ENCODE measurements at regions of chr13 and their contacts with region 1.

Region 1: GRCh38 chr13:107211073-107211472 is 643.1 kb upstream of the ARGLU1 start:
- DNase-seq: peak; percentile 70 to 73
- H3K4me3 ChIP-seq: no peak overlapping the region
- H3K27ac ChIP-seq: no peak overlapping the region
- H3K4me1 ChIP-seq: no peaks in the 10 kb centered on the region
- H3K27me3 ChIP-seq: no peaks in the 10 kb centered on the region
- CTCF ChIP-seq: peak; percentile 95

Region 2: GRCh38 chr13:107650081-107650701 is 439.1 kb after region 1 on chr13:
- CTCF ChIA-PET with region 1: no interaction called
- POLR2A ChIA-PET with region 1: no interaction called
- intact Hi-C with region 1: loop called (anchors 1 kb)
- DNase-seq: peak in 1 of 2 experiments; percentile 45
- H3K4me3 ChIP-seq: no peak overlapping the region
- H3K27ac ChIP-seq: no peak overlapping the region
- H3K4me1 ChIP-seq: no peaks in the 10 kb centered on the region
- H3K27me3 ChIP-seq: no peaks in the 10 kb centered on the region
- CTCF ChIP-seq: peak; percentile 84

Region 3: DNA sequence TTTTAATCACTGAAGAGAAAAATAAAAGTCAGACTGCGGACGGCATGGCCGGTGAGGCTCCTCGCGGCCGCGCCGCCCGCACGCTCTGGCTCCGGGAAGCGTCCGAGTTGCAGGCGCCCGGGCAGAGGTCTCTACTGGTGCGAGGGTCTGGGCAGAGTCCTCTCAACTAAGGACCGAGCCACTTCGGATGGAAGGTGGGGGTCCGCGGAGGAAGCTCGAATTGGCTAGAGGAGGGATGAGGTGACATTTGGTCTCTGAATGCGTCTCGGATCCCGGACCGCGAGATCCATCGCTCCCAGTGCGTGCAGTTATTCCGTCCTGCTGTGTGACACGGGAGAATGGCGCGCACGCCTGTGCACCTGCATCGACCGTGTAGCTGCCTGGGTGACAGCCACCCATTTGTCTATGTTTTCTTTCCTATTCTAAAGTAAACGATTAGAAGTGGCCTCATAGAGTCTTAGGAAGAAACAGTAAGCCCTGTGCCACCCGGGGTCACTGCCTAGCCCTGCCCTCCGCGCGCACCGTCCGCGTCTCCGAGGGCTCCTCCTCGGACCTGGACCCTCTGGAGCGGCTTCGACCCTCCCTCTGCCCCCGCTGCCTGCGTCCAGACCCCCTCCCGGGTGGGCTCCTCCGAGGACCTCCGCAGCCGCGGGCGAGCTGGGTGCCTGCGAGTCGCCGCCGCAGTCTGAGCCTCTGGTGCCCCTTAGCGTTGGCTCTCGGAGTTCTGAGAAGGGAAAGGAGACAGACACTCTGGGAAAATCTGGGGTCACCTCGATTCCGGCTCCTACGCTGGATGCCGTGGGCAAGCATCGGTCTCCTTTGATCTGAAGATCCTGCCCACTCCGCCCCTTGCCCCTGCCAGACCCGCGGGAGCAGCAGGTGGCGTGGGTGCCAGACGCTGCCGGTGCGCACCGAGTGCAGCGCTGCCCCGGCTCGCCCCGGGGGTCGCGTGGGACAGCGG is 656.9 kb after region 1 on chr13:
- CTCF ChIA-PET with region 1: no interaction called
- POLR2A ChIA-PET with region 1: no interaction called
- intact Hi-C with region 1: loop called (anchors 2 kb)
- DNase-seq: peak in 1 of 2 experiments; percentile 29
- H3K4me3 ChIP-seq: peak overlapping the region; percentile 61
- H3K27ac ChIP-seq: no peak overlapping the region
- H3K4me1 ChIP-seq: no peaks in the 10 kb centered on the region
- H3K27me3 ChIP-seq: no peaks in the 10 kb centered on the region
- CTCF ChIP-seq: peak; percentile 59

Measured in PC-9 (cell line).